Stomach (tissue), 19 donors: ENCODE measurements at regions of chr13 and their contacts with region 1.

Region 1: GRCh38 chr13:36981156-36981743 is 17.9 kb downstream of the ALG5 start:
- DNase-seq: peak in 1 of 2 donors; percentile 69
- H3K4me3 ChIP-seq: no peak overlapping the region
- H3K27ac ChIP-seq: no peak overlapping the region
- H3K4me1 ChIP-seq: peaks cover 0 to 8% (median 0%) of the 10 kb centered on the region in 4 donors
- H3K27me3 ChIP-seq: no peaks in the 10 kb centered on the region
- CTCF ChIP-seq: peak in 5 of 7 experiments; percentile 10 to 35 (median 29)
- EP300 ChIP-seq: no peak
- POLR2A ChIP-seq: no peak

Region 2: GRCh38 chr13:36858290-36858689 is 123.0 kb before region 1 on chr13:
- intact Hi-C with region 1: loop called (anchors 5 kb)
- DNase-seq: peak in 1 of 2 donors; percentile 76
- H3K4me3 ChIP-seq: no peak overlapping the region
- H3K27ac ChIP-seq: no peak overlapping the region
- H3K4me1 ChIP-seq: no peaks in the 10 kb centered on the region
- H3K27me3 ChIP-seq: no peaks in the 10 kb centered on the region
- CTCF ChIP-seq: peak in 5 of 7 experiments; percentile 18 to 53 (median 36)
- EP300 ChIP-seq: no peak
- POLR2A ChIP-seq: no peak